Mammary epithelial cell (primary cell): ENCODE measurements at regions of chr1 and their contacts with region 1.

Region 1: GRCh38 chr1:155323798-155324610 is 3.3 kb downstream of the RUSC1 start:
- DNase-seq: peak; percentile 97
- H3K4me3 ChIP-seq: peak overlapping the region; percentile 70 to 84 (median 72)
- H3K27ac ChIP-seq: peak overlapping the region; percentile 55
- H3K4me1 ChIP-seq: peaks cover 24% of the 10 kb centered on the region
- H3K27me3 ChIP-seq: no peaks in the 10 kb centered on the region
- CTCF ChIP-seq: no peak

Region 2: GRCh38 chr1:155208541-155209311 is 115.3 kb before region 1 on chr1 and contains the start of gene MTX1:
- CTCF ChIA-PET with region 1: no interaction called
- dilution Hi-C with region 1: no loop called
- in situ Hi-C with region 1: no loop called
- intact Hi-C with region 1: loop called (anchors 1 kb)
- DNase-seq: peak; percentile 74
- H3K4me3 ChIP-seq: peak within 1 kb of the TSS; percentile 86 to 100 (median 100)
- H3K27ac ChIP-seq: peak within 1 kb of the TSS; percentile 98
- H3K4me1 ChIP-seq: peaks cover 27% of the 10 kb centered on the region
- H3K27me3 ChIP-seq: no peaks in the 10 kb centered on the region
- CTCF ChIP-seq: no peak
- total RNA-seq, gene MTX1: 34.2 to 49.3 TPM

Region 3: DNA sequence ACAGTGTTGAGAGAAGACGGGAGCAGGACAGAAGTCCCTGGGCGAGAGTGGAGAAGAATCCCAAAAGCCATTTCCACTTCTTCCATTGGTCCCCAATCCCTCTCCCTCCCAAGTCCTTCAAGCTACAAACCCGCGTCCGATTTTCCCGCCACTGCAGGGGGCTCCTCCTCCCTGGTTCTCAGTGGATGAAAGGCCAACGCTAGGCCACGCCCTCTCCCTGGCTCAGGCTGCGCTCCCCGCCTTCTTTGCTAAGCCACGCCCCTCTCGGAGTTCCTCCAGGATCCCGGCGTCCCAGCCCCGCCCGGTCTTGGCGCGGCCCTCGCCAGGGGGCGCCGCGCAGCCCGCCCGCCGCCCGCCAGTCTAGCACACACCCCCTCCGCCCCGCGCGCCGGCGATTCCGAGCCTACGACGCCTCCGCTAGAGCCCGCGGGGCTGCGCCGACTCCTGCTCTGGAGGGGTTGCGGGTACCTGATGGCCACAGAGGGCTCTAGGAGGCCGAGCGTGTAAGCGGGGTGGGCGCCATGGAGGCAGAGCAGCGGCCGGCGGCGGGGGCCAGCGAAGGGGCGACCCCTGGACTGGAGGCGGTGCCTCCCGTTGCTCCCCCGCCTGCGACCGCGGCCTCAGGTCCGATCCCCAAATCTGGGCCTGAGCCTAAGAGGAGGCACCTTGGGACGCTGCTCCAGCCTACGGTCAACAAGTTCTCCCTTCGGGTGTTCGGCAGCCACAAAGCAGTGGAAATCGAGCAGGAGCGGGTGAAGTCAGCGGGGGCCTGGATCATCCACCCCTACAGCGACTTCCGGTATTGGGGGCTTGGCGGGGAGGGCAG is 46.7 kb before region 1 on chr1 and contains the start of gene HCN3:
- CTCF ChIA-PET with region 1: interaction called, 12 read pairs
- dilution Hi-C with region 1: no loop called
- in situ Hi-C with region 1: loop called in 1 of 2 experiments (anchors 5 kb)
- intact Hi-C with region 1: loop called (anchors 1 kb)
- DNase-seq: peak; percentile 90
- H3K4me3 ChIP-seq: peak within 1 kb of the TSS; percentile 47 to 86 (median 68)
- H3K27ac ChIP-seq: no peak within 1 kb of the TSS
- H3K4me1 ChIP-seq: peaks cover 20% of the 10 kb centered on the region
- H3K27me3 ChIP-seq: no peaks in the 10 kb centered on the region
- CTCF ChIP-seq: peak; percentile 34 to 48
- total RNA-seq, gene HCN3: 1.3 to 4.8 TPM

Region 4: GRCh38 chr1:155308493-155309422 is 15.2 kb before region 1 on chr1 and contains the start of gene FDPS:
- CTCF ChIA-PET with region 1: no interaction called
- dilution Hi-C with region 1: no loop called
- in situ Hi-C with region 1: no loop called
- intact Hi-C with region 1: loop called (anchors 1 kb)
- DNase-seq: peak; percentile 100
- H3K4me3 ChIP-seq: peak within 1 kb of the TSS; percentile 73 to 86 (median 85)
- H3K27ac ChIP-seq: peak within 1 kb of the TSS; percentile 87
- H3K4me1 ChIP-seq: peaks cover 19% of the 10 kb centered on the region
- H3K27me3 ChIP-seq: no peaks in the 10 kb centered on the region
- CTCF ChIP-seq: no peak
- total RNA-seq, gene FDPS: 180 to 795 TPM

Region 5: DNA sequence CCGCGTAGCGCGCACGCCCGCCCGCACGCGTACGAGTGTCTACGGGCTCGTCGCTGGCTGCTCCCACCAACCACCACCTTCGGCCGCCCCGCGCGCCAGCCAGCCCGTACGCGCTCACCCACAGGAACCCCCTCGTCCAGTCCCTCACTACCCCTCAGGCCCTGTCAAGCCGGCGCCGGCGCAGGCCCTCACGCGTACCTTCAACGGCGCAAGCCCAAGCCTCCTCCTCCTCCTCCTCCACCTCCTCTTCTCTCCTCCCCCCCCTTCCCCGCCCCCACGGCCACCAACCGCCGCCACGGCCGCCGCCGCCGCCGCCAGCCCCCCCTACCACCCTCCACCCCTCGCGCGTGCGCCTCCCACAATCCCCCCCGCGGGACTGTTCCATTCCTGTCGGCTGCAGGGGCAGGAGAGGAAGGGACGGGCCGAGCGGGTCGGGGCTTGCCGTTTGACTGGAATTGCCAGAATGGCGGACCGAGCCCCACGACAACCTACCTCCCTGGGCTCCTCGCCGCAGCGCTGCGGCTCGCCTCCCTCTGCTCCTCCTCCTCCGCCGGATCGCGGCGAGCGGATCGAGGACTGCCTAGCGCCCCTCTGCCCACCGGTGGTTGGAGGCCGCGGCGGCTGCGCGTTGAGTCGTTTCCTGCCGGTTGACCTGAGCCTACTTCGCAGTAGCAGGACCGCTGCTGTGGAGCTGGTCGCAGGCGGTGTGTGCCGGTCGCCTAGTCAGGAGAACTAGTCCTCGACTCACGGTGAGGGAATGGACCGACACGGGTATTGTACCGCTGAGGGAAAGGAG is 238.8 kb after region 1 on chr1 and contains the start of gene ASH1L:
- CTCF ChIA-PET with region 1: no interaction called
- dilution Hi-C with region 1: no loop called
- in situ Hi-C with region 1: no loop called
- intact Hi-C with region 1: loop called (anchors 10 kb)
- DNase-seq: peak; percentile 93
- H3K4me3 ChIP-seq: peak within 1 kb of the TSS; percentile 80 to 98 (median 91)
- H3K27ac ChIP-seq: peak within 1 kb of the TSS; percentile 85
- H3K4me1 ChIP-seq: peaks cover 3% of the 10 kb centered on the region
- H3K27me3 ChIP-seq: no peaks in the 10 kb centered on the region
- CTCF ChIP-seq: no peak
- total RNA-seq, gene ASH1L: 30.2 to 32.1 TPM

Region 6: DNA sequence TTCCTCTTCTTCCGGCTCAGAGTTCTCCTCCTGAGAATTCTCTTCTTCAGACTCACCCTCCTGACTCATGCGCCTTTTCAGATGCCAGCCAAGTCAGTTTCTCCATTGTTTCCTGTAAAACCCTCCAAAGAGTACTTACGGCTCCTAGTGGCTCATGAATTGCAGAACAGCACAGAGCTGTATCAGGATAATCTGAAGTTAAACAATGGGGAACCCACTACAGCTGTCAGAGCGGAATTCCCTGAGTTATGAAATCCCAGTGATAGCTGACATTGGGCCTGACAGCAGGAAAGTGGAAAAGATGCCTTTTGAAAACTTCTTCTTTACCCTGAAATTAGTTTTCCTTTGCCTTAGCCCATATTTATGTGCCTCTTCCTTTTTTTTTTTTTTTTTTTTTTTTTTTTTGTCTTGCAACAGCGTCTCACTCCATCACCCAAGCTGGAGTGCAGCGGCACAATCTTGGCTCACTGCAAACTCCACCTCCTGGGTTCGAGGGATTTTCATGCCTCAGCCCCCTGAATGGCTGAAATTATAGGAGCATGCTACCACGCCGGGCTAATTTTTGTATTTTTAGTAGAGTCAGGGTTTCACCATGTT is 324.6 kb after region 1 on chr1:
- CTCF ChIA-PET with region 1: no interaction called
- dilution Hi-C with region 1: loop called (anchors 25 kb)
- in situ Hi-C with region 1: no loop called
- intact Hi-C with region 1: loop called (anchors 1 kb)
- DNase-seq: peak; percentile 95
- H3K4me3 ChIP-seq: peak overlapping the region; percentile 39 to 58 (median 46)
- H3K27ac ChIP-seq: peak overlapping the region; percentile 78
- H3K4me1 ChIP-seq: peaks cover 56% of the 10 kb centered on the region
- H3K27me3 ChIP-seq: no peaks in the 10 kb centered on the region
- CTCF ChIP-seq: peak; percentile 73 to 80